ENCODE measurements at regions of chr6 and their contacts with region 1.

Region 1: GRCh38 chr6:25263657-25264056 is 15.5 kb upstream of the CARMIL1 start:
- DNase-seq: no peak
- ATAC-seq: no peak
- H3K4me3 Mint-ChIP-seq: no peak overlapping the region
- H3K27ac Mint-ChIP-seq: no peak overlapping the region
- H3K4me1 Mint-ChIP-seq: peaks cover 2% of the 10 kb centered on the region
- H3K27me3 Mint-ChIP-seq: peaks cover 1% of the 10 kb centered on the region
- CTCF ChIP-seq: no peak

Region 2: GRCh38 chr6:25173951-25174474 is 89.6 kb before region 1 on chr6:
- CTCF ChIA-PET with region 1: no interaction called
- POLR2A ChIA-PET with region 1: no interaction called
- intact Hi-C with region 1: no loop called
- DNase-seq: no peak
- ATAC-seq: peak; percentile 71
- H3K4me3 Mint-ChIP-seq: no peak overlapping the region
- H3K27ac Mint-ChIP-seq: no peak overlapping the region
- H3K4me1 Mint-ChIP-seq: peaks cover 57% of the 10 kb centered on the region
- H3K27me3 Mint-ChIP-seq: peaks cover 5% of the 10 kb centered on the region
- CTCF ChIP-seq: no peak

Region 3: DNA sequence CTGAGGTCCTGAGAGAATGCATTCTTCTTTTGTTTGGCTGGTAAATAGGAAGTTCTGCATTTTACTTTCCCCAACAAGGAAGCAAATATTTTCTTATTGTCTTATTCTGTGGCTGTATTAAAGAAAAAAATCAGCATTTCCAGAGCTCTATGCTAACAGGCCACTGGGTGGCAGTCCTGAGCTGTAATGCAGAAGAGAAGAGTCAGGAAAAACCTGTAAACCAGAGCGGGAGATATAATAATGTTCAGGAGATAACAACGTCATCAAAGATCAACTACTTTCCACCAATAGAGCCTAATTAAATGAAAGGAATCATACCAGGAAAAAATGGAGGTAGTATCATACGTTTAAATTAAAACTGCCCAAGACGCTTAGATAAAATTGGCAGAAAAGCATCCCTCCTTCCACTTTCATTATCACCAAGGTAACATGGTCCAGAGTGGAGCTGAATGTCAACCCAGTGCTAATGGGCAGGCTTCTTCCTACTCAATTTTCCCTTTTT is 40.1 kb before region 1 on chr6:
- CTCF ChIA-PET with region 1: interaction called, 21 read pairs
- POLR2A ChIA-PET with region 1: no interaction called
- intact Hi-C with region 1: no loop called
- DNase-seq: peak; percentile 77
- ATAC-seq: peak; percentile 77
- H3K4me3 Mint-ChIP-seq: peak overlapping the region; percentile 59
- H3K27ac Mint-ChIP-seq: no peak overlapping the region
- H3K4me1 Mint-ChIP-seq: peaks cover 11% of the 10 kb centered on the region
- H3K27me3 Mint-ChIP-seq: peaks cover 6% of the 10 kb centered on the region
- CTCF ChIP-seq: peak; percentile 97

Region 4: GRCh38 chr6:25278914-25279747 is 15.5 kb after region 1 on chr6 and contains the start of gene CARMIL1:
- CTCF ChIA-PET with region 1: interaction called, 85 read pairs
- POLR2A ChIA-PET with region 1: interaction called, 3 read pairs
- intact Hi-C with region 1: no loop called
- DNase-seq: peak; percentile 81
- ATAC-seq: peak; percentile 79
- H3K4me3 Mint-ChIP-seq: peak within 1 kb of the TSS; percentile 81
- H3K27ac Mint-ChIP-seq: peak within 1 kb of the TSS; percentile 66
- H3K4me1 Mint-ChIP-seq: peaks cover 36% of the 10 kb centered on the region
- H3K27me3 Mint-ChIP-seq: no peaks in the 10 kb centered on the region
- CTCF ChIP-seq: peak; percentile 75
- total RNA-seq, gene CARMIL1: 3.6 to 4.1 TPM

Region 5: GRCh38 chr6:25377664-25378063 is 114.0 kb after region 1 on chr6:
- CTCF ChIA-PET with region 1: no interaction called
- POLR2A ChIA-PET with region 1: no interaction called
- intact Hi-C with region 1: no loop called
- DNase-seq: no peak
- ATAC-seq: no peak
- H3K4me3 Mint-ChIP-seq: no peak overlapping the region
- H3K27ac Mint-ChIP-seq: no peak overlapping the region
- H3K4me1 Mint-ChIP-seq: peaks cover 17% of the 10 kb centered on the region
- H3K27me3 Mint-ChIP-seq: no peaks in the 10 kb centered on the region
- CTCF ChIP-seq: no peak

Region 6: DNA sequence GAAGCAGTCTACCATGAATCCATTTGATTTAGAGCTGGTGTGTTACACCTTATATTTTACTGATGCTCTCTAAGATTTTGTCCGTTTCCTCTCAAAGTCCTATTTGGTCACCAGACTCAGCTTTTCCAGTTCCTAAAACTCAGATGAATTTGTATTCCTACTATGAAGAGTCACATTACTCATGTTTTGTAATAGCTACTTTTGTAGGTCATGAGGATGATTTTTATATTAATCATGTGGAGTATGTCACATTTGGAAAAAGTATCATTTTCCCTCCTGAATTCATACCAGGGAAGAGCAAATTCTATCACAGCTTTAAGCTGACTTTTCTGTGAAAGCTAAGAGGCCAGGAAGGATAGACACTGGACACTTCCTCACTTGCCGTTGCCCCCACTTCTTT is 247.7 kb after region 1 on chr6:
- CTCF ChIA-PET with region 1: interaction called, 11 read pairs
- POLR2A ChIA-PET with region 1: no interaction called
- intact Hi-C with region 1: no loop called
- DNase-seq: no peak
- ATAC-seq: no peak
- H3K4me3 Mint-ChIP-seq: no peak overlapping the region
- H3K27ac Mint-ChIP-seq: no peak overlapping the region
- H3K4me1 Mint-ChIP-seq: no peaks in the 10 kb centered on the region
- H3K27me3 Mint-ChIP-seq: no peaks in the 10 kb centered on the region
- CTCF ChIP-seq: no peak

Region 7: GRCh38 chr6:25601800-25602673 is 338.4 kb after region 1 on chr6:
- CTCF ChIA-PET with region 1: interaction called, 37 read pairs
- POLR2A ChIA-PET with region 1: no interaction called
- intact Hi-C with region 1: loop called (anchors 5 kb)
- DNase-seq: no peak
- ATAC-seq: no peak
- H3K4me3 Mint-ChIP-seq: no peak overlapping the region
- H3K27ac Mint-ChIP-seq: no peak overlapping the region
- H3K4me1 Mint-ChIP-seq: peaks cover 5% of the 10 kb centered on the region
- H3K27me3 Mint-ChIP-seq: no peaks in the 10 kb centered on the region
- CTCF ChIP-seq: peak; percentile 79